HEK293 (cell line): ENCODE measurements at regions of chr22 and their contacts with region 1.

Region 1: DNA sequence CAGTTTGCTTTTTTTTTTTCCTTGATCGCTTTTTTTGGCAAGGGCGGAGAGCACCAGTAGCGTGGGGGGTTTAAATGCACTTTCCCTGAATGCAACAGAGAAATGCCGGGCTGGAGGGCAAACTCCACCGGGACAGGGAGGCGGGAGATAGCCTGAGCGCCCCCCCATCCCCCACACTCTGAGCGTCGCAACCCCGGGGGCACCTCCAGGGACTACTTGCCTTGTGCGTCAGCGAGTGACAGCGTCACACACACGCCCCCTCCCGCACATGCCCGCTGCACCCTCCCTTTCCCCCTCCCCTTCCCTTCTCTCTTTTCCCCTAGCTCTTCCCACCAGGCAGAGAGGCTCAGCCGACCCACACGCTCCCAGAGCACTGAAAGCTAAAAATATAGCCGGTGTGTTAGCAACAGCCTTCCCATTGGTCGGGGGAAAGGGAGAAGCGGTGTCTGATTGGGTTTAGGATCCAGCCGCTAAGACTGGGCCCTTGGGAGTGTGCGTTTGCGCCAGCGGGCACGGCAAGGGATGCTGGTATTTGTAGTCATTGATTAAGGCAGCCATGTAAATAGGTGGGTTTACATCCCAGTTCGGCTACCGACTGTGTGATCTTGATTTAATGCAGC is 1.7 kb upstream of the TOB2 start:
- H3K4me3 ChIP-seq: peak overlapping the region; percentile 90
- H3K27ac ChIP-seq: peak overlapping the region; percentile 100
- H3K4me1 ChIP-seq: no peaks in the 10 kb centered on the region
- CTCF ChIP-seq: 0 out of 2 replicates have a peak, but pooled peaks have one; percentile 14

Region 2: GRCh38 chr22:41381329-41382097 is 66.8 kb before region 1 on chr22 and contains the start of gene TEF:
- CTCF ChIA-PET with region 1: interaction called, 4 read pairs
- POLR2A ChIA-PET with region 1: interaction called, 52 read pairs
- H3K4me3 ChIP-seq: peak within 1 kb of the TSS; percentile 66
- H3K27ac ChIP-seq: peak within 1 kb of the TSS; percentile 75
- H3K4me1 ChIP-seq: peaks cover 9% of the 10 kb centered on the region
- CTCF ChIP-seq: no peak

Region 3: GRCh38 chr22:41417622-41418390 is 30.5 kb before region 1 on chr22:
- CTCF ChIA-PET with region 1: no interaction called
- POLR2A ChIA-PET with region 1: interaction called, 36 read pairs
- H3K4me3 ChIP-seq: no peak overlapping the region
- H3K27ac ChIP-seq: no peak overlapping the region
- H3K4me1 ChIP-seq: peaks cover 6% of the 10 kb centered on the region; the same call in 1 of the 2 replicates
- CTCF ChIP-seq: no peak

Region 4: GRCh38 chr22:41436322-41437113 is 11.8 kb before region 1 on chr22:
- CTCF ChIA-PET with region 1: interaction called, 5 read pairs
- POLR2A ChIA-PET with region 1: interaction called, 31 read pairs
- H3K4me3 ChIP-seq: no peak overlapping the region
- H3K27ac ChIP-seq: peak overlapping the region; percentile 37; the same call in 1 of the 2 replicates
- H3K4me1 ChIP-seq: peaks cover 3% of the 10 kb centered on the region
- CTCF ChIP-seq: no peak

Region 5: DNA sequence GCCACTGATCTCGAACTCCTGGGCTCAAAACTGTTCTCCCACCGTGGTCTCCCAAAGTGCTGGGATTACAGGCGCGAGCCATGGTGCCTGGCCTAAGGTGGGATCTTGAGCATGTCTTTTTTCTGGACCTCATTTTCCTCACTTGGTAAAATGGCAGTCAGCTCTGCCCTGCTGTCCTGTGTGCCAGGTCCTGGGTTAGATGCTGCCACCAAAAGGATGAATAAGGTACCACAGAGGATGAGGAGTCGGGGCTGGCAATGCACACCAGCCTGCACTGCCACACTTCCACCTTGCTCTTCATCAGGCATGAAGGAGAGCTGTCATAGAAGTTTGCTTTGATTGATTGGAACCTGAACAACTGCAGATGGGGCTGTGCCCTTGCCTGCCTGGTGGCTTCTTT is 52.9 kb after region 1 on chr22:
- CTCF ChIA-PET with region 1: interaction called, 3 read pairs
- POLR2A ChIA-PET with region 1: interaction called, 13 read pairs
- H3K4me3 ChIP-seq: no peak overlapping the region
- H3K27ac ChIP-seq: no peak overlapping the region
- H3K4me1 ChIP-seq: no peaks in the 10 kb centered on the region
- CTCF ChIP-seq: no peak